Activated CD8-positive, alpha-beta T cell treated with anti-CD3 and anti-CD28 coated beads, Interleukin-2, amount 10 ng/mL, durations not matched to agents 7 days and 5 days (primary cell): ENCODE measurements at regions of chr15 and their contacts with region 1.

Region 1: DNA sequence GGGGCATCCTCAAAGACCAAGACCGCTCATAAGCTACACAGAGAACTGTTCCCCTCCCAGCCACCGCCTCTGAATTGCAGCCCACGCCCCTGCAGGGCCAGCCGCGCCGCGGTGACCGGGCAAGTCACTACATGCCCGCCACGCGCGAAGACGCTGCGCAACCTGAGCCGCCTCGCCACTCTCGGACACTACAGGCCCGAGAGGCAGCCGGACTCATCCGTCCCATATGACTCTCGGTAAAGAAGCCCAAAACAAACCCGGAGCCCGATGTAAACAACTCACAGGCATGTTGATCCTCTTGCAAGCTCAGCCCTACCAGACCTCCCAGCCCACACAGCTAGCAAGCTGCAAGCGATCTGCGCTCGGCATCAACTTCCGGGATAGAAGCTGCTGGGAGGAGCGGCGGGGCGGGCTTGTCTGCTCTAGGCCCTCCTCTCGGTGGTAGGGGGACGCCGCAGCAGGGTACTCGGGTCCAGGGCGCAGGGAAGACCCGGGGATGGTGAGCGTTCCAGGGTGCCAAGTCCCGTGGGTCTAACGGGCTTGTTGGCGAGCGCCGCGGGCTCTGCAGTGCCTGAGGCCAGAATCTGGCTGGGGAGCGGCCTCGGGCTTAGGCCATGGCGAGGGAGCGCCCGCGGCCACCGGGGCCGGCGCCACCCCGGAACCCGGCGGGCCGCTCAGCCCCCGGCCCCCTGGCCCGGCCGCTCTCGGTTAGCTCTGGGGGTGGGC is at the start of gene RPS27L:
- DNase-seq: peak; percentile 94
- ATAC-seq: peak; percentile 98
- H3K4me3 Mint-ChIP-seq: peak within 1 kb of the TSS; percentile 97
- H3K27ac Mint-ChIP-seq: peak within 1 kb of the TSS; percentile 94
- H3K4me1 Mint-ChIP-seq: peaks cover 27% of the 10 kb centered on the region
- H3K27me3 Mint-ChIP-seq: no peaks in the 10 kb centered on the region
- total RNA-seq, gene RPS27L: 235 to 238 TPM

Region 2: GRCh38 chr15:63146669-63147068 is 10.6 kb before region 1 on chr15:
- CTCF ChIA-PET with region 1: interaction called, 3 read pairs
- POLR2A ChIA-PET with region 1: interaction called, 10 read pairs
- DNase-seq: no peak
- ATAC-seq: no peak
- H3K4me3 Mint-ChIP-seq: no peak overlapping the region
- H3K27ac Mint-ChIP-seq: no peak overlapping the region
- H3K4me1 Mint-ChIP-seq: peaks cover 9% of the 10 kb centered on the region
- H3K27me3 Mint-ChIP-seq: no peaks in the 10 kb centered on the region